AG04450 (cell line): ENCODE measurements at regions of chr1 and their contacts with region 1.

Region 1: GRCh38 chr1:158203693-158204457 is 23.2 kb downstream of the CD1D start:
- DNase-seq: peak; percentile 23
- H3K4me3 ChIP-seq: no peak overlapping the region
- H3K27ac ChIP-seq: no peak overlapping the region
- H3K27me3 ChIP-seq: no peaks in the 10 kb centered on the region
- CTCF ChIP-seq: peak; percentile 73

Region 2: DNA sequence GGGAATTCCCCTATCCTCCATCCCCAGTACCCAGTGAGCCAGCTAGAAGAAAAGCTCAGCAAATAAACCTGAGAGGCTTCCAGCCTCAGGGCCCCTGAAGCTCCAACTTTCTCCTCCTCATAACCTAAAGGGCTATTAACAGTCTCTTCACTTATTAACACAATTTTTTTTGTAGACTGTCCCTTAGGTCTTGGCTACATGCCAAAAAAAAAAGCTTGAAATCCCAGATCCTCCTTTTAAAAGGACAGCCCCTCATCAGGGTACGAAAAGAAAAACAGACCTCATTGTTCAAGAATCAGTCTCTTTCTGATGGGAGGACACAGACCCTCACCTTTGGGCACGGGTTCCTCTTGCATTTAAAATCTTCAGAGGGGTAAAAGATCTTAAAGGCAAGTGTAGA is 96.0 kb before region 1 on chr1:
- CTCF ChIA-PET with region 1: no interaction called
- POLR2A ChIA-PET with region 1: no interaction called
- DNase-seq: no peak
- H3K4me3 ChIP-seq: no peak overlapping the region
- H3K27ac ChIP-seq: no peak overlapping the region
- H3K27me3 ChIP-seq: peaks cover 12% of the 10 kb centered on the region
- CTCF ChIP-seq: no peak

Region 3: DNA sequence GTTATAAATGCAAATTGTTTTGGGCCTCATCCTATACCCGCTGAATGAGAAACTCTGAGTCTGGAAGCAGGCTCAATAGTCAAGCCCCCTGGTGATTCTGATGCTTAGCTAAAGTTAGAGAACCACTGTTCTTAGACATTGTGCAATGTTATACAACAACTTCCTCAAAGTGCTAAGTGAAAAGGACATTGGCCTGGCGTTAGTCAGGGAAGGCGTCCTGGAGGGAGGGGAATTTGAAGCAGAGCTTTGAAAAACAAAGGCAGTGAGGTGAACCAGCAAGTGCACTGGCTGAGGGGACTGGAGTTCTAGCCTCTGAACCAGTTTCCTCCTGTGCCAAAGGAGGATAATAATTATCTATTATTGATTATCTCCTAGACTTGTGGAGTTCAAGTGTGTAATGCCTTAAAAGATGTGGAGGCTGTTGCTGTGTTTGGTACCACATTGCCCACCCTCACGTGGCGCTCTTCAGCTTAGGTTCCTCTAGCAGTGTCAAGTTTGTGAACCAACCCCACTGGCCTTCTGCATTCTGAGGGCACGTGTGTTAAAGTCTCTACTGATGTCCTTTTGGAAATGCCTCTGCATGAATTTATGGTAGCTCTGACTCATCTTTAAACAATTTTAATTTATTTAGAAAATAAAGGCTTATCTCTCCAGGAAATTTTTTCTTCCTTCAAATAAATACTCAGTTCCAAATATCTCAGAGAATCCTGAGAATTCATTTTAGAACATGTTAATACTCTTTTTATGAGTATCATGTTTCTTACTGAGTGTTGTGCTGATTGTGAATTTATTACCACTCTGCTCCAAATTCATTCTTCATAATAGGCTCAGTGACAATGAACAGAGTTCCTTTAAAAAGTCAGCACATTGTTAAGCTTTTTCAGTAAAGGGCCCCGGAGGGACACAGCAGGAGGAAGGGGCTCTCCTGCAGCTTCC is 17.8 kb before region 1 on chr1:
- CTCF ChIA-PET with region 1: interaction called, 22 read pairs
- POLR2A ChIA-PET with region 1: no interaction called
- DNase-seq: no peak
- H3K4me3 ChIP-seq: no peak overlapping the region
- H3K27ac ChIP-seq: no peak overlapping the region
- H3K27me3 ChIP-seq: peaks cover 27% of the 10 kb centered on the region
- CTCF ChIP-seq: no peak

Region 4: DNA sequence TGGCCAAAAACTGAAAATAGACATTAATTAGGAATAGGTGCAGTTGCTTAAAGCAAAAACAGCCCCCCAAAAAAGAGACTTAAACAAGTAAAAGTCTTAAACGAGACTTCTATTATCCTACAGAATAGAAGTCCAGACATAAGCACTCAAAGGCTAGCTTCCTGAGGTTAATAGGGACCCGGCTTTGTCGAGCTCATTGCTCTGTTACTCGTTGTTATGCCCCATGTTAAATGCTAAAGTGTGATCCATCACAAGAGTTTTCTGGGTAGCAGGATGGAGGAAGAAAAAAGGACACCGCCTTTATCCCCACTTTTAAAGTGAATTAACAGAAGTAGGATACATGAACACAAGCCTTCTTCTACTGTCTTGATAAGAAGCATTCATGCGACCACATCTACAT is 12.6 kb before region 1 on chr1:
- CTCF ChIA-PET with region 1: interaction called, 22 read pairs
- POLR2A ChIA-PET with region 1: no interaction called
- DNase-seq: no peak
- H3K4me3 ChIP-seq: no peak overlapping the region
- H3K27ac ChIP-seq: no peak overlapping the region
- H3K27me3 ChIP-seq: peaks cover 3% of the 10 kb centered on the region
- CTCF ChIP-seq: no peak

Region 5: DNA sequence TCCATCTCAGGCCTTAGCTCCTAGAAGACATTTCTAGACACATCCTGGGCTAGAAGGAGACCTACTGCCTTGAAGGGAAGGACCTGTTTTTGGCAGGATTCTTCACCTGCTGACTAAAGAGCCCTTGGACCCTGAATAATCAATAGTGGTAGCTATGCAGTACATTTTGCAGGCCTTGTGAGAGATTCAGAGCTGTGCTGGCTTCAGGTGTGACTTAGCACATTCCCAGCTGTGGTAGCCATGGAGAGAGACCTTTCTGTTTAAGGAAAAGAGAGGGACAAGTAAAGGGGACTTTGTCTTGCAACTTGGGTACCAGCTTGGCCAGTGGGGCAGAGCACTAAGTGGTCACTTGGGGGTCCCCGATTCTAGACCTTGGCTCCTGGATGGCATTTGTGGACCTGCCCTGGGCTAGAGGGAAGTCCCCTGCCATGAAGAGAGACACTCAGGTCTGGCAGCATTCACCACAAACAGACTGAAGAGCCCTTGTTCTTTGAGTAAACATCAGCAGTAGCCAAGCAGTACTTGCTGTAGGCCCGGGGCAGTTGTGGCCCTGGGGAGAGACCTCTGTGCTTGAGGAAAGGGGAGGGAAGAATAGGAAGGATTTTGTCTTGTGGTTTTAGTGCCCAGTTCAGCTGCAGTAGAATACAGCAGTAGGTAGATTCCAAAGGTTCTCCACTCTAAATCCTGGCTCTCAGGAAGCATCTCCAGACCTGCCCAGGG is 24.2 kb after region 1 on chr1:
- CTCF ChIA-PET with region 1: interaction called, 10 read pairs
- POLR2A ChIA-PET with region 1: no interaction called
- DNase-seq: no peak
- H3K4me3 ChIP-seq: no peak overlapping the region
- H3K27ac ChIP-seq: no peak overlapping the region
- H3K27me3 ChIP-seq: no peaks in the 10 kb centered on the region
- CTCF ChIP-seq: no peak

Region 6: DNA sequence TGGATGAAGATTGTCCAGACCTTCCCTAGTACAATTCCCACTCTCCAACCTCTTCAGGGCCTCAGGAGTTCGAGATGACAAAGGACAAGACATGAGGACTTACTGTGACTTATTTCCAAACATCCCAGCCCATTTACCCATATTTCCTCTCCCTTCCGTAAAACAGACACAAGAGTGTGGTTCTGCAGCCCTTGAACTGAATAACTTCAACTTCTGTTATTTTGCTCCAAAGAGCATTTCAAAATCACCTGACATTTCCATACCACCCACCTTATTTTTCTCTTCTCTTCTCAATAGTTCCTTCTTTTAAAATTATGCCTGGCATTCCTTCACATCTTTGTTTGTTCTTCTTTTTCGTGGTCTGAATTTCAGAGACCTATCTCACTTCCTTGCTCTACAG is 230.9 kb after region 1 on chr1:
- CTCF ChIA-PET with region 1: no interaction called
- POLR2A ChIA-PET with region 1: no interaction called
- DNase-seq: no peak
- H3K4me3 ChIP-seq: no peak overlapping the region
- H3K27ac ChIP-seq: no peak overlapping the region
- H3K27me3 ChIP-seq: no peaks in the 10 kb centered on the region
- CTCF ChIP-seq: no peak

Region 7: GRCh38 chr1:158527190-158527815 is 323.4 kb after region 1 on chr1:
- CTCF ChIA-PET with region 1: interaction called, 15 read pairs
- POLR2A ChIA-PET with region 1: no interaction called
- DNase-seq: peak; percentile 39
- H3K4me3 ChIP-seq: no peak overlapping the region
- H3K27ac ChIP-seq: no peak overlapping the region
- H3K27me3 ChIP-seq: no peaks in the 10 kb centered on the region
- CTCF ChIP-seq: peak; percentile 69

Region 8: DNA sequence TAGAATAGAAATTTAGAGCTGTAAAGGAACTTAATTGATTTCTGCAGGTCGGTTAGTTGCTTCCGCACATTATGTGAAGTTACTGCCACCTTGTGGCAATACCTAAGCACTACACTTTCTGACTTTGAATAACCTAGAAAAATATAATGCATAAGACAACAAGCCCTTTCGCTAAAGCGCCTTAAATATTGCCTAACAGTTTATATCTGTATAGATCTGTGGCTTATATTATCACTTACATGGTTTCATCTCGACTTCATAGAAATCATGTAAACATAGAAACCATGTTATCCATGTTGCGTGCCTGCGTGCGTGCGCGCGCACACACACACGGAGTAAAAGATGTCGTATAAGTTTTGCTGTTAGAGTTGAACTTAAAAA is 794.9 kb after region 1 on chr1:
- CTCF ChIA-PET with region 1: interaction called, 79 read pairs
- POLR2A ChIA-PET with region 1: no interaction called
- DNase-seq: peak; percentile 18
- H3K4me3 ChIP-seq: peak overlapping the region; percentile 69
- H3K27ac ChIP-seq: no peak overlapping the region
- H3K27me3 ChIP-seq: no peaks in the 10 kb centered on the region
- CTCF ChIP-seq: peak; percentile 89

Region 9: DNA sequence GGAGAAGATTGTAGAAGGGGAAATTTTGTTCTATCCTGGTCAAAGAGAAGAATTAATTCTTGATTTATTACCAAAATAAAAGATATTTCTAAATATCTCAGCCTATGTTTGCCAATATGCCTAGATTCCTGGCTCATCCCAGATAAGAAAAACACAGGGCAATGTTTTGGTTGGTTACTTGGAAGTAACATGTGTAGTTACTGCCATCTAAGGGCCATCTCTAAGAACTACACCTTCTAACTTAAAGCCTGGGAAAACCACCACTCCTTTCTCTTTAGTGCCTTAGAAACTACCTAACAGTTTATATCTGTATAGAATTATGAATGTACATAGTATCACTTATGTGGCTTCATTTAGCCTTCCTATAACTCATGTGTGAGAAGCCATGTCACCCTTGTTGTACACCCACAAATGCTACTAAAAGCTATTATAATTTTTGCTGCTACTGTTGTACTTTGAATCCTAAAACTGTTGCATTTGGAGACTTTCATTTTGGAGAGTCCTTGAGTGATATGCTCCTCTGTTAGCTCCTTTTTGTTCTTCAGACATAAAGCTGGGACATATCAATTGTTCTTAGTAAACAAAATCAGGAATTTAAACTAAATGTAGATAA is 868.2 kb after region 1 on chr1:
- CTCF ChIA-PET with region 1: interaction called, 69 read pairs
- POLR2A ChIA-PET with region 1: no interaction called
- DNase-seq: peak; percentile 48
- H3K4me3 ChIP-seq: no peak overlapping the region
- H3K27ac ChIP-seq: no peak overlapping the region
- H3K27me3 ChIP-seq: no peaks in the 10 kb centered on the region
- CTCF ChIP-seq: peak; percentile 78